Astrocyte of the cerebellum (primary cell): ENCODE measurements at regions of chr3 and their contacts with region 1.

Region 1: GRCh38 chr3:147421184-147421912 is 12.2 kb downstream of the ZIC1 start:
- DNase-seq: no peak
- H3K4me3 ChIP-seq: peak overlapping the region; percentile 46
- CTCF ChIP-seq: no peak

Region 2: GRCh38 chr3:148084931-148085330 is 663.6 kb after region 1 on chr3:
- in situ Hi-C with region 1: loop called (anchors 10 kb)
- DNase-seq: no peak
- H3K4me3 ChIP-seq: no peak overlapping the region
- CTCF ChIP-seq: no peak